ENCODE measurements at regions of chr1 and their contacts with region 1.

Region 1: DNA sequence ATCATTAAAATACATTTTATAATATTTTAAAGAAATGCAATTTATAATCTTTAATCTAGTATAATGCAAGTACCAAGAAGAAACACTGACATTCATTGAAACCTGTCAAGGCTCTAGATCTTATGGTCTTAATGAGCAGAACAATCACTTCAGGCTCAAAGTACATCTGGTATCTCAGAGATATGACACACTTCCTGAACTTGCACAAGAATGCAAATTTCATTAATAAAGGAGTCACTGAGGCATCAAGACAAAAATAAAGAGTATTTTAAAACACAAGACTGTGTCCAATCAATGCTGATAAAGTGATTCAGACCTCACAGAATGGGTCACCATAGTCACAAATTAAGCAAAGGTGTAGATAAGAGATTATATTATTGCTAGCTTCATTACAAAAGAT is 178.1 kb downstream of the AK5 start:
- DNase-seq: no peak
- H3K4me3 Mint-ChIP-seq: no peak overlapping the region
- H3K27ac Mint-ChIP-seq: no peak overlapping the region
- H3K4me1 Mint-ChIP-seq: no peaks in the 10 kb centered on the region
- H3K27me3 Mint-ChIP-seq: no peaks in the 10 kb centered on the region

Region 2: DNA sequence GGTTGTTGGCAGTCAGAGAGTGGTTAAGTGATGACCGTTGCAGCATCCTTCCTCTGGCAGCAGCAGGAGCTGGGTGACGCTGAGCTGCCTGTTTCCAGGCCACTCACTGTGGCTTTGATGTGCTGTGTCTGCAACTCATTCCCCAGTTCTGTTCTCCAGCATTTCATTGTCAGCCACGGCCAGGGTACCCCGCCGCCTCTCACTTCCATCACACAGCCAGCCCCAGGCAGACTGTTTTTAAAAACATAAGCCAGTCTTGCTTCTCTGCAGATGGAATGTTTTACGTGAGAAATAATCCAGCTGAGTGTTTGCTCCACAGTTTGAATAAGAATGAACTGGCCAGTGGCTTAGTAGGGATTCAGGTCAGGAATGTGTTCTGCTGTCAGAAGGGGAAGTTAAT is 1406.9 kb before region 1 on chr1:
- CTCF ChIA-PET with region 1: no interaction called
- POLR2A ChIA-PET with region 1: interaction called, 11 read pairs
- DNase-seq: no peak
- H3K4me3 Mint-ChIP-seq: no peak overlapping the region
- H3K27ac Mint-ChIP-seq: no peak overlapping the region
- H3K4me1 Mint-ChIP-seq: peaks cover 12% of the 10 kb centered on the region
- H3K27me3 Mint-ChIP-seq: peaks cover 8% of the 10 kb centered on the region

Region 3: DNA sequence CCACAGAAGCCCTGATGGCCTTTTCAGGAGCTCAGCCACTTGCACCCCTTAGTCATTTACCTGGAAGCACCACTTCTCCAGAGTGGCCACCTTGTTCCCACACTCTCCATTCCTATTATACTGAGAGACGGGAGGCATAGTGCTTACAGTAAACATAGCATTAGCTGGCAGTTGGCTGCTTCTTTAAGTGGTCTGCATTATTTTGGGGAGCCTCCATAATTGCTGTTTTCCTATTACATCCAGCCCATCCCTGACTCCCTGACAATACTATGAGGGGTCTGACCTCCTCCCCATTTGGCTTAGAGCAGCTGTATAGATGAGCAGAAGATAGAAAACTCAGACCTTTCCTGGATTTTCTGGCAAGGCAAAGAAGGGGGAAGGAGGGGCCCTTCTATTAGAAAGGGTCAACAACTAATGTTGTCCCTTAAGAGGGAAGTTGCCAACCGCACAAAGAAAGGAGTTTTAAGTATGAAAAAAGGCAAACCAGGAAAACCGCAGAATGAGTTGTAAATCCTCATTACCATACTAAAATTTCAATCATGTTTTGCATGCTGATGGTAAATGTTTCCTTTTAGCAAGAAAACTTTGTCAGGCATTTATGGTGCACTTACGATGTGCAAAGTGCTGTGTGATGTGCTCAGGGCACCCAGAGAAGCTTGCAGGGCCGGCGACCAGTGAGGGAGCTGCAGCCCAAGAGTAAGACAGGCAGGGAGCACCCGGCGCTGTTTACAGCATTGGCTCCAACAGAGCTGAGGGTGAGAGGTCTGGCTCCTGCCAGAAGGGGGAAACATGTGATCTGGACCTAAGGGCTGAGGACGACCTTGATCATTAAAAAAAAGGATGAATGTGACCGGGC is 55.3 kb after region 1 on chr1:
- CTCF ChIA-PET with region 1: no interaction called
- POLR2A ChIA-PET with region 1: no interaction called
- DNase-seq: no peak
- H3K4me3 Mint-ChIP-seq: no peak overlapping the region
- H3K27ac Mint-ChIP-seq: no peak overlapping the region
- H3K4me1 Mint-ChIP-seq: peaks cover 7% of the 10 kb centered on the region
- H3K27me3 Mint-ChIP-seq: no peaks in the 10 kb centered on the region

Measured in activated CD4-positive, alpha-beta T cell treated with anti-CD3 and anti-CD28 coated beads, Interleukin-2, amount 10 ng/mL, durations not matched to agents 7 days and 5 days (primary cell).